HepG2 (cell line): ENCODE measurements at regions of chr21 and their contacts with region 1.

Region 1: GRCh38 chr21:15742052-15742670 is 12.4 kb downstream of the USP25 start:
- DNase-seq: peak; percentile 81
- ATAC-seq: peak; percentile 93
- H3K4me3 ChIP-seq: no peak overlapping the region
- H3K27ac ChIP-seq: no peak overlapping the region
- H3K4me1 ChIP-seq: peaks cover 62% of the 10 kb centered on the region
- H3K27me3 ChIP-seq: no peaks in the 10 kb centered on the region
- CTCF ChIP-seq: no peak
- EP300 ChIP-seq: peak in 1 of 2 experiments; percentile 68; a peak in 1 of 4 replicates
- POLR2A ChIP-seq: no peak
- RAD21 ChIP-seq: no peak

Region 2: GRCh38 chr21:15729674-15730483 is 12.3 kb before region 1 on chr21 and contains the start of gene USP25:
- CTCF ChIA-PET with region 1: no interaction called
- POLR2A ChIA-PET with region 1: no interaction called
- in situ Hi-C with region 1: no loop called
- intact Hi-C with region 1: loop called (anchors 1 kb)
- DNase-seq: peak; percentile 68
- ATAC-seq: peak; percentile 91
- H3K4me3 ChIP-seq: peak within 1 kb of the TSS; percentile 80 to 93 (median 85)
- H3K27ac ChIP-seq: peak within 1 kb of the TSS; percentile 78
- H3K4me1 ChIP-seq: peaks cover 18% of the 10 kb centered on the region
- H3K27me3 ChIP-seq: peaks cover 0 to 7% of the 10 kb centered on the region in 2 experiments; a peak in 3 of 5 replicates
- CTCF ChIP-seq: peak; percentile 43; the same call in 1 of the 2 replicates
- EP300 ChIP-seq: no peak
- POLR2A ChIP-seq: peak; percentile 78 to 92
- RAD21 ChIP-seq: peak; percentile 71
- total RNA-seq, gene USP25: 26.3 and 34.5 TPM in 2 replicates

Region 3: GRCh38 chr21:15793547-15794235 is 51.5 kb after region 1 on chr21:
- CTCF ChIA-PET with region 1: no interaction called
- POLR2A ChIA-PET with region 1: no interaction called
- in situ Hi-C with region 1: no loop called
- intact Hi-C with region 1: loop called (anchors 5 kb)
- DNase-seq: no peak
- ATAC-seq: no peak
- H3K4me3 ChIP-seq: no peak overlapping the region
- H3K27ac ChIP-seq: no peak overlapping the region
- H3K4me1 ChIP-seq: no peaks in the 10 kb centered on the region
- H3K27me3 ChIP-seq: no peaks in the 10 kb centered on the region
- CTCF ChIP-seq: no peak
- EP300 ChIP-seq: no peak
- POLR2A ChIP-seq: no peak
- RAD21 ChIP-seq: no peak